CD8-positive, alpha-beta T cell (primary cell): ENCODE measurements at regions of chr15 and their contacts with region 1.

Region 1: DNA sequence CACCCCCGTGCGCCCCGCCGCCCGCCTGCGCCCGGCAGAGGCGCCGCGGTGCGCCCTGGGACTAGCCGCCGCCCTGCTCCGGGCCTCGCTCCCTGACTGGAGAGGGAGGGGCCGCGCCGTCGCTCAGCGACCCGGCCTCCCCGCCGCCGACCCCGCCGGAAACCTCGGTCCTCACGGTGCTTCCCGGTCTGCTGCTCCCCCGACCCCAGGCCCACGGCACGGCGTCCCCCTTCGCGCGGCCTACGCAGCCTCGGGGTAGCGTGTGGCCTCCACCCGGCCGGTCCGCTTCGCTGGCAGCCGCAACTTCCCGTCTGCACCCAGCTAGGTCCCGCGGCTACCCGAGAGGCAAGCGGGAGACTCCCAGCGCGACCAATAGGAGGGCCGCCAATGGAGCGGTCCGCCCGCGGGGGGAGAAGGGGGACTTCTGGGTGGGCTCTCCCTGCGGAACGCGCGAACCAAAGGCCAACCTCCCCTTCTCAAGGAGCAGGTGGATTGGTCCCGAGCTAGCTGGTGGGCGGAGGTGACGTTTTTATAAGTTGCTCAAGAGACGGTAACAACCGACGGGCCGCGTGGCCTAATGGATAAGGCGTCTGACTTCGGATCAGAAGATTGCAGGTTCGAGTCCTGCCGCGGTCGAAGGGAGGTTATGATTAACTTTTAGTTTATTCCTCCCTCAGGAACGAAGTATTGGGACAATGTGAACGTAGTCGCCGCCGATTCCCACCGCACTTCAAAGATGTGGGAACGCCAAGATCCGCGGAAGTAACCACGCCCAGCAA is at the start of gene POLG:
- DNase-seq: peak; percentile 98 to 99 (median 99)
- ATAC-seq: peak; percentile 89
- H3K4me3 ChIP-seq: peak within 1 kb of the TSS; percentile 57 to 72
- H3K4me3 Mint-ChIP-seq: peak within 1 kb of the TSS; percentile 89
- H3K27ac ChIP-seq: peak within 1 kb of the TSS; percentile 68 to 76
- H3K27ac Mint-ChIP-seq: peak within 1 kb of the TSS; percentile 99
- H3K4me1 ChIP-seq: peaks cover 56% of the 10 kb centered on the region
- H3K4me1 Mint-ChIP-seq: peaks cover 46% of the 10 kb centered on the region
- H3K27me3 ChIP-seq: no peaks in the 10 kb centered on the region
- H3K27me3 Mint-ChIP-seq: no peaks in the 10 kb centered on the region
- CTCF ChIP-seq: no peak
- total RNA-seq, gene POLG: 147 to 158 TPM

Region 2: DNA sequence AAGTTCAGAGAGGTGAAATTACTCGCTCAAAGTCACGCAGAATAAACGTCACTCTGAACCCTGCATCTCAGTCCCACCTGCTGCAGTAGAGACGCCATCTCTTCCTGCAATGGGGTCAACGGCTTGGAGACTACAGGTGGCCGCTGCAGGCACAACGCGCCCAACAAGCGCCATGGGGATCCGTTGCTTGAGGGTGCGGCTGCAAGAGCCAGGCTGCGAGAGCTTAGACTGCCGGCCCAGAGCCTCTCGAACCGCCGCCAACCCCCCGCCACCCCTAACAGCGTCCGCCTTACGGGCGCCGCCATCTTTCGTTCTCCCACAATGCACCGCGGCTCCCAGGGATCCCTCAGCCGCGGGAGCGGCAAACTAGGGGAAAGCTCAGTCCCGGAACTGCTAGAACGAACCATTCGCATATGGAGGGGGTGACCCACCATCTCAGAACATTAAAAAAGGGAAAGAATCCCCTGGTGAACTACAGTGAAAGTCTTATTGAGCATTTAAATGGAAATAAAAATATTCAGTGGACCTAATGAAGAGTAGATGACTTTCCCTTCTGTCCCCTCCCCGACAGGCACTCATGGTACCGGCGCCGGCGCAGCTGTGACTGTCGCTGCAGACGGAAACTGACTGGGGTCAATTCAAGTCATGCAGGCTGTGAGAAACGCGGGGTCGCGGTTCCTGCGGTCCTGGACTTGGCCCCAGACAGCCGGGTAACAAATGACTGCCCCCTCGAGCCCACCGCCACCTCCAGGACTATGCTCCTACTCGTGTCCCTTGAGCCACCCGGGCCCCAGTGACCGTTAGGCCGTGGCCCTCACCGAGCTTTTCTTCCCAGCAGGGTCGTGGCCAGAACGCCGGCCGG is 867.4 kb before region 1 on chr15 and contains the starts of genes MRPL46 and MRPS11:
- CTCF ChIA-PET with region 1: no interaction called
- POLR2A ChIA-PET with region 1: interaction called, 3 read pairs
- intact Hi-C with region 1: loop called in 1 of 2 experiments (anchors 2 kb)
- DNase-seq: peak; percentile 81 to 94 (median 89)
- ATAC-seq: peak; percentile 91
- H3K4me3 ChIP-seq: peak within 1 kb of the TSS; percentile 57 to 92
- H3K4me3 Mint-ChIP-seq: peak within 1 kb of the TSS; percentile 98
- H3K27ac ChIP-seq: peak within 1 kb of the TSS; percentile 90 to 98
- H3K27ac Mint-ChIP-seq: peak within 1 kb of the TSS; percentile 99
- H3K4me1 ChIP-seq: peaks cover 17% of the 10 kb centered on the region
- H3K4me1 Mint-ChIP-seq: peaks cover 27% of the 10 kb centered on the region
- H3K27me3 ChIP-seq: no peaks in the 10 kb centered on the region
- H3K27me3 Mint-ChIP-seq: no peaks in the 10 kb centered on the region
- CTCF ChIP-seq: no peak
- total RNA-seq, gene MRPL46: 11.8 to 12.6 TPM
- total RNA-seq, gene MRPS11: 7.4 to 9.6 TPM

Region 3: DNA sequence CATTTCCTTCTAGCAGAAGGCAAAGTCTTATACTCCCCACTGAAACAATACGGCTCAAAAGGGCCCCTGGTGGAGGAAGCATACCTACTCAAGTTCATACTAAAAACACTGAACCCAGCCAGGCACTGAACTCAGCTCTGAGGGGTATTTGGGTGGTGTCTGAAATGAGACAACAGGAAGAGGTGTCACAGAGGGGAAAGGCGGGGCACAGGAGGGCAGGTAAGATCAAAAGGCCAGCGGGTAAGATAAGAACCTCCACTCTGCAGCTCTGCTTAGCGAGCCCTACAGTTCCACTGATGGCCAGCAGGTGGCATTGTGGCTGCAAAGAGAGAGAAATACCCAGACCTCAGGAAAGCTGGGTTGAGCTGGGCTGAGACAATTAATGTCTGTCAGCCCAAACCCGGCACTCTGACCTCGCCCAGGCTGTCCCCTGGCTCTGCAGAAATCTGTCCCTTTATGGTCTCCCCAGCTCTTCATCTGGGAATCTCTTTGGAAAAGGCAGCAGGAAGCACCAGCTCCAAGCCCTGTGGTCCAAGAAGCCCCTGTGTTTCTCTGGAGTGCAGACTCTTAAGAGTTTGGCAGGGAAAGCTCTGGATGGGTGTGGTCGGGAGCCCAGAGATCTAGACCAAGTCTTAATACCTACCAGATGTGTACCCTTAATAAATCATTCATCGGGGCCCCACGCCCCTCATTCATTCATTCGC is 429.9 kb before region 1 on chr15:
- CTCF ChIA-PET with region 1: no interaction called
- POLR2A ChIA-PET with region 1: interaction called, 3 read pairs
- intact Hi-C with region 1: loop called (anchors 2 to 5 kb)
- DNase-seq: peak; percentile 90 to 97 (median 95)
- ATAC-seq: peak; percentile 98
- H3K4me3 ChIP-seq: no peak overlapping the region
- H3K4me3 Mint-ChIP-seq: peak overlapping the region; percentile 61
- H3K27ac ChIP-seq: peak overlapping the region; percentile 36 to 66
- H3K27ac Mint-ChIP-seq: peak overlapping the region; percentile 91
- H3K4me1 ChIP-seq: peaks cover 31% of the 10 kb centered on the region
- H3K4me1 Mint-ChIP-seq: peaks cover 41% of the 10 kb centered on the region
- H3K27me3 ChIP-seq: no peaks in the 10 kb centered on the region
- H3K27me3 Mint-ChIP-seq: no peaks in the 10 kb centered on the region
- CTCF ChIP-seq: peak; percentile 87

Region 4: DNA sequence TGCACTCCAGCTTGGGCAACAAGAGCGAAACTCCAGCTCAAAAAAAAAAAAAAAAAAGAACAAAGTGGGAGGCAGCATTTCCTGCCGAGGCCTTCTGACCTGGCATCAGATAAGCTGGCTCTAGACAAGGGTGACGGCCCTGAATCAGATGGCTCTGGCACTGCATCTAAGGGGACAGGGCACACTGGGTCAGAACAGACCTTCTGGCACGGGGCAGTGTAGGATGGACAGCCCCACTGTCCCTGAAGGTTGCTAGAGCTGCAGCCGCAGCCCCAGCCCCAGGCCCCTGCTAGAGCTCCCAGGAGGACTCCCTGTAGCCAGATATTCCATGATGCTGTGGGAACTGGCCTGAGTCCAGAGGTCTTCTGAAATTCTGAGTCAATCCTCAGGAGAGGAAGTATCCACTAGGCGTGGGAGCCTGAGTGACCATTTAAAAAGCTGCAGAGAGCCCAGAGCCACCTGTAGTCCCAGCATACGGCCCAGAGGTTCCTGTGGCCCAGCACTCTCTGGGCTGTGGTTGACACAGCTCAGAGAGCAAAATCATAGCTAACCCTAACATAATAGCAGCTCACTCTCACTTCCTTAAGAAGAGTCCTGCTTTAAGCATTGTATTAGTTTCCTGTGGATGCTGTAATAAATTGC is 352.3 kb before region 1 on chr15:
- CTCF ChIA-PET with region 1: no interaction called
- POLR2A ChIA-PET with region 1: no interaction called
- intact Hi-C with region 1: no loop called
- DNase-seq: no peak
- ATAC-seq: no peak
- H3K4me3 ChIP-seq: no peak overlapping the region
- H3K4me3 Mint-ChIP-seq: no peak overlapping the region
- H3K27ac ChIP-seq: no peak overlapping the region
- H3K27ac Mint-ChIP-seq: no peak overlapping the region
- H3K4me1 ChIP-seq: no peaks in the 10 kb centered on the region
- H3K4me1 Mint-ChIP-seq: no peaks in the 10 kb centered on the region
- H3K27me3 ChIP-seq: no peaks in the 10 kb centered on the region
- H3K27me3 Mint-ChIP-seq: no peaks in the 10 kb centered on the region
- CTCF ChIP-seq: no peak

Region 5: GRCh38 chr15:89243691-89244471 is 90.8 kb before region 1 on chr15 and contains the start of gene FANCI:
- CTCF ChIA-PET with region 1: no interaction called
- POLR2A ChIA-PET with region 1: interaction called, 12 read pairs
- intact Hi-C with region 1: loop called (anchors 1 kb)
- DNase-seq: peak; percentile 93 to 98 (median 97)
- ATAC-seq: peak; percentile 98
- H3K4me3 ChIP-seq: peak within 1 kb of the TSS; percentile 77 to 85
- H3K4me3 Mint-ChIP-seq: peak within 1 kb of the TSS; percentile 95
- H3K27ac ChIP-seq: peak within 1 kb of the TSS; percentile 24 to 52
- H3K27ac Mint-ChIP-seq: peak within 1 kb of the TSS; percentile 90
- H3K4me1 ChIP-seq: peaks cover 15% of the 10 kb centered on the region
- H3K4me1 Mint-ChIP-seq: peaks cover 25% of the 10 kb centered on the region
- H3K27me3 ChIP-seq: no peaks in the 10 kb centered on the region
- H3K27me3 Mint-ChIP-seq: no peaks in the 10 kb centered on the region
- CTCF ChIP-seq: no peak
- total RNA-seq, gene FANCI: 5.1 to 6.3 TPM

Region 6: GRCh38 chr15:89321521-89322410 is 12.9 kb before region 1 on chr15:
- CTCF ChIA-PET with region 1: interaction called, 3 read pairs
- POLR2A ChIA-PET with region 1: interaction called, 28 read pairs
- intact Hi-C with region 1: no loop called
- DNase-seq: no peak
- ATAC-seq: no peak
- H3K4me3 ChIP-seq: no peak overlapping the region
- H3K4me3 Mint-ChIP-seq: no peak overlapping the region
- H3K27ac ChIP-seq: no peak overlapping the region
- H3K27ac Mint-ChIP-seq: peak overlapping the region; percentile 55
- H3K4me1 ChIP-seq: no peaks in the 10 kb centered on the region
- H3K4me1 Mint-ChIP-seq: peaks cover 2% of the 10 kb centered on the region
- H3K27me3 ChIP-seq: no peaks in the 10 kb centered on the region
- H3K27me3 Mint-ChIP-seq: no peaks in the 10 kb centered on the region
- CTCF ChIP-seq: no peak

Region 7: GRCh38 chr15:89575146-89575655 is 240.5 kb after region 1 on chr15 and contains the start of gene TICRR:
- CTCF ChIA-PET with region 1: no interaction called
- POLR2A ChIA-PET with region 1: no interaction called
- intact Hi-C with region 1: loop called (anchors 2 to 10 kb)
- DNase-seq: peak; percentile 88 to 99 (median 92)
- ATAC-seq: peak; percentile 98
- H3K4me3 ChIP-seq: peak within 1 kb of the TSS; percentile 58 to 86
- H3K4me3 Mint-ChIP-seq: peak within 1 kb of the TSS; percentile 82
- H3K27ac ChIP-seq: no peak within 1 kb of the TSS
- H3K27ac Mint-ChIP-seq: peak within 1 kb of the TSS; percentile 13
- H3K4me1 ChIP-seq: peaks cover 6% of the 10 kb centered on the region
- H3K4me1 Mint-ChIP-seq: peaks cover 11% of the 10 kb centered on the region
- H3K27me3 ChIP-seq: no peaks in the 10 kb centered on the region
- H3K27me3 Mint-ChIP-seq: peaks cover 11% of the 10 kb centered on the region
- CTCF ChIP-seq: no peak
- total RNA-seq, gene TICRR: 0.11 TPM in 1 of 2 experiments, not detected in the other

Region 8: DNA sequence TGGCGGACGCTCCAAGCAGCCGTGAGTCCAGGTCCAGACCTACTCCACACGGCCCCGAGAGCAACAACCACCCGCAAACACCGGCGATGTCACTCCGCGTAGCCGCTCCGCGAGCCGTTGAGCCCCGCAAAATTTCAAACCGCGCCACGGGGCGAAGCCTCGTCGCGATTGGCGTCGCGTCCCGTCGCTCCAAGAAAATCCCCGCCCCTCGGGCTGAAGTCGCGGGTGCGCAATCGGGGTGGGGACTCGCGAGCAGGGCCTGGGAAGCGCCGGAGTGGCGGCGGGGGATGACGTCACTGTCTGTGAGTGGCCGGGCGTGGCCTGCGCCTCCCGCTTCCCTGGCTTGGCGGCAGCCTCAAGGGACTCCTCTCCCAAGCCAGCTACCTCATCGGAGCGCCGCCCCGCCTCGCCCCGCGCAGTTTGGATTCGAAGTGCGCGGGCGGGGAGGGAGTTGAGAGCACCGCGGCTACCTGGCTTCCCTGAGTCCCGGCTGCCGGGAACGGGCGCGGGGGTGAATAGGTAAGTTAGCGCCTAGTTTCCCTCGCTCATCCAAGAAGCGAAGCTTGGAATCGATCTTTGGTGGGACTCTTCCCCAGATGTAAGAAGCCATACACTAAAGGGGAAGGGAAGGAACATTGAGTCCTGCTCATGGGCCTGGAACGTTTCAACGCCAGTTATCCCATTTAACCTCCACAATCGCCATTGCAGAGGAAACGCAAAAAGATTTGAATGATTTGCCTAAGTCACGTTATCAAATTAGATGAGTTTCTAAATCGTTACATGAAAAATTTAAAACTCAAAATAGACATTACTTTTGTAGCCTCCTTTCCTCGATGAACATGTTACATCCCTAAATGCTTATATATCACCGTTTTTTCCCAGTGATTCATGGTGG is 1660.0 kb after region 1 on chr15 and contains the start of gene PRC1:
- CTCF ChIA-PET with region 1: no interaction called
- POLR2A ChIA-PET with region 1: no interaction called
- intact Hi-C with region 1: loop called in 1 of 2 experiments (anchors 10 kb)
- DNase-seq: peak; percentile 92 to 99 (median 97)
- ATAC-seq: peak; percentile 96
- H3K4me3 ChIP-seq: peak within 1 kb of the TSS; percentile 78 to 95
- H3K4me3 Mint-ChIP-seq: peak within 1 kb of the TSS; percentile 99
- H3K27ac ChIP-seq: peak within 1 kb of the TSS; percentile 81 to 94
- H3K27ac Mint-ChIP-seq: peak within 1 kb of the TSS; percentile 97
- H3K4me1 ChIP-seq: peaks cover 13% of the 10 kb centered on the region
- H3K4me1 Mint-ChIP-seq: peaks cover 19% of the 10 kb centered on the region
- H3K27me3 ChIP-seq: no peaks in the 10 kb centered on the region
- H3K27me3 Mint-ChIP-seq: no peaks in the 10 kb centered on the region
- CTCF ChIP-seq: no peak
- total RNA-seq, gene PRC1: 24.6 to 31.3 TPM